ENCODE measurements at regions of chr22 and their contacts with region 1.

Region 1: DNA sequence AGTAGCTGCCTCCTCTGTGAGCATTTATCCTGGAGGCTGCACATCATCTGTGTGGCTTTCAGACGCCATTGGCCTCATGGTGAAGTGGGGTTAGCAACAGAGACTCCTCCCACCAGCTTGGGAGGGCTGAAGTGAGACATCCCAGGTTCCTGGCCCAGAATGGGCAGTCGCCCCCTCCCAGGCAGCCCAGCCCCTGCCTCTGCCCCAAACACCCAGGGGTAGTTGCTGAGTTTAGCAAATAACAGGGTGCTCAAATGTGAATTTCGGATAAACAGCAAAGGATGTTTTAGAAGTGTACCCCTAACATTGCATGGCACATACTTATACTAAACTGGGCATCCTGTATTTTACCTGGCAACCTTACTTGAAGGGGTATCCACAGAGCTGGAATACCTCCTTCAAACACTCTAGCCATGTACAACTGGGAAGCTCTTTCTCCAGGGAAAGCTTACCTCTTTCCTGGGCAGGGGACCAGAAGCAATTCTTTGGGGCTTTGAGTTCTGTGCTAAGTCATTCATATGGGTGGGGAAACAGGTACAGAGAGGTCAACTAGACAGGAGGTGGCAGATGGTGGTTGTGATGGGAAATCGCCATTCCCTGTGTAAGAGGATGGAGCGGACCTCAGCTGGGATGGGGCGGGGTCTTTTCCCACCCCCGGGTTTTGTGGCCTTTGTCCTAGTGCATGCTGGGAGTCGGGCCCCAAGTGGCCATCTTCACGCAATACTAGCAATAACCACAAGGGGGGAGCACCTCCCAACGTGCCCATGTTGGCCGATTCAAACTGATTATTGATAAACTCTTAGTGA is 19.3 kb downstream of the MTFP1 start:
- DNase-seq: no peak
- ATAC-seq: peak in 3 of 4 donors; percentile 32 to 58 (median 49)
- H3K4me3 ChIP-seq: no peak overlapping the region
- H3K27ac ChIP-seq: no peak overlapping the region
- H3K4me1 ChIP-seq: peaks cover 0 to 12% (median 0%) of the 10 kb centered on the region in 12 donors
- H3K27me3 ChIP-seq: peaks cover 0 to 36% (median 0%) of the 10 kb centered on the region in 9 donors
- CTCF ChIP-seq: peak; percentile 48 to 77 (median 62)
- POLR2A ChIP-seq: no peak

Region 2: GRCh38 chr22:30600921-30601320 is 156.1 kb after region 1 on chr22:
- intact Hi-C with region 1: no loop called
- DNase-seq: no peak
- ATAC-seq: no peak
- H3K4me3 ChIP-seq: no peak overlapping the region
- H3K27ac ChIP-seq: no peak overlapping the region
- H3K4me1 ChIP-seq: peaks cover 0 to 11% (median 5%) of the 10 kb centered on the region in 12 donors
- H3K27me3 ChIP-seq: no peaks in the 10 kb centered on the region
- CTCF ChIP-seq: no peak
- POLR2A ChIP-seq: no peak

Region 3: DNA sequence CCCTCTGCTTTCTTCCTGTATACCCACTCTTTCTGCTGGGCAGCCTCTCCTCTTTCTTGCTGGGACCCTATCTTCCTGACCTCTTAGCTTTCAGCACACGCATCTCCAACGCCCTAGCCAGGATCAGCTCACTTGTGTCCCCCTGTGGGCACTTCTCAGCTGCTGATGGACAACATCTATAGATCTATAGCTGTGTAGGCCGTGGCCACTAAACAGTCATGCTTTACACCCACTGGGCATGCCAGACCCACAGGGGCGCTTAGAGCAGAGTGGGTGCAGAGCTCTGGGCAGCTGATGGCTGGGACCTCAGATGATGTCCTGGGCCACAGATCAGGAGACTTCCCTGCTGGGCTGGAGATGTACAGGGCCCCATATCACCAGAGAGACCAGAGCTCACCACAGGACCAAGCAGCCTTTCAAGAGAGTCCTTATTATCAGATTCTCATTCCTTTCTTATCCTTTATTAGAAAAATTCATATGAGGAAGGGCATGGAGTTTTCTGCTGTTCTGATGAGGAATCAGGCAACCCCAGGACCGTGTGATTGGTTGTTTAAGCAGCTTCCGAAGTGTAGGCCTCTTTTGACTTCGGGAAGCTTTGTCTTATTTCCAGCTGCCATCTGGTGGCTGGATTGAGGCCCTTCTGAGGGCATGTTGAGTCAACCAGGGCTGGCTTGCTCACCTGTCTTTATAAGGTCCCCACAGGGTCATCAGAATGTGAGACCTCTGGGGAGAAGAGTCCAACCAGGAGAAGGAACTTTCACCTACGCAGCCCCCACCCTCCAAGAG is 310.3 kb after region 1 on chr22:
- intact Hi-C with region 1: loop called in 2 of 10 experiments (anchors 10 kb)
- DNase-seq: peak in 4 of 5 donors; percentile 36 to 45 (median 41)
- ATAC-seq: peak; percentile 63 to 87 (median 79)
- H3K4me3 ChIP-seq: no peak overlapping the region
- H3K27ac ChIP-seq: no peak overlapping the region
- H3K4me1 ChIP-seq: peaks cover 0 to 3% (median 0%) of the 10 kb centered on the region in 12 donors
- H3K27me3 ChIP-seq: no peaks in the 10 kb centered on the region
- CTCF ChIP-seq: peak; percentile 38 to 71 (median 60)
- POLR2A ChIP-seq: no peak

Region 4: DNA sequence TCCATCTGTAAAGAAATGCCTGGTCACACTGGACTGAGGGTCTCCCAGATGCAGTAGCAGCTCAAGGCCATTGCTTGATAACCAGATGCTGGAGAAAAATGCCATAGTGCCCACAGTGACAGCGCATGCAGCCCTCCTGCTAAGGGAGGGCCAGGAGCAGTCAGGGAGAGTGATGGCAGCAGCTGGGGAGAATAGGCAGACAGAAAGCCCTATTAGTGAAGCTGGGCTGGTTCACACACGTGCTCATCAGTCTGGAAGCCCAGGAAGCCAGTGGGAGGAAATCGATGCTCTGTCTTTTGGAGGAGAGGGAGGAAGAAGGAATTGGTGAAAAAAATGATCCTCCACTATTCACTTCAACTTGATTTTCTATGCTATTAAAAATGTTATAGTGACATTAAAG is 332.8 kb after region 1 on chr22:
- intact Hi-C with region 1: no loop called
- DNase-seq: no peak
- ATAC-seq: no peak
- H3K4me3 ChIP-seq: no peak overlapping the region
- H3K27ac ChIP-seq: no peak overlapping the region
- H3K4me1 ChIP-seq: peaks cover 0 to 5% (median 0%) of the 10 kb centered on the region in 12 donors
- H3K27me3 ChIP-seq: no peaks in the 10 kb centered on the region
- CTCF ChIP-seq: no peak
- POLR2A ChIP-seq: no peak